Activated naive CD4-positive, alpha-beta T cell treated with anti-CD3 and anti-CD28 coated beads for 36 hours (primary cell): ENCODE measurements at regions of chr7 and their contacts with region 1.

Region 1: DNA sequence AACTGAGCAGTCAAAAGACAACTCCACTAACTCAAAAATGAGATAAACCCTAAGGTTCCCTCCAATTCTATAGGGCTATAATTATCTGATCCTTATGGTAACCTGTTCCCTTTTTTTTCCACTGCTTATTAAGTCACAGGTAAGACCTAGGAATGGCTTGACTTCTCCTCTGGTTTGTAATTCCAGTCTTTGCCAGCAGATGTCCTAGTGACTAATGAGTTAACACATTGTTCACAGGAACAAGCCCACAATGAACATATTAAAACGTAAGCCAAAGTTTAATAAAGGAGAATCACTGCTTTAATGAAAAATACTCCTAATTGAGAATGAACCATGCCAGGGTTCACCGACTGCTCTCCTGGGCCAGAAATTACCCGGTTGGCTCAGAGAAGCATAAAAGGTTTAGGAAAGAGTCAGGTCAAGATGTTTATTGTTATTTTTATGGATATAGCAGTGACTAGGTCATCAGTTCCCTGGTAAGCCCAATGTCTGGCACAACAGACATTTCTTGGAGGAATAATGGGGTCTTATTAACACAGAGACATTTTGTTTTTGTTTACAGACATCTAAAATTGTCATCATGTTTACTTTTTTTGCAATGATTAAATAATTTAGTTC is 120.1 kb downstream of the ELAPOR2 start:
- DNase-seq: peak; percentile 62
- H3K4me3 Mint-ChIP-seq: no peak overlapping the region
- H3K27ac Mint-ChIP-seq: no peak overlapping the region
- H3K4me1 Mint-ChIP-seq: no peaks in the 10 kb centered on the region
- H3K27me3 Mint-ChIP-seq: no peaks in the 10 kb centered on the region

Region 2: DNA sequence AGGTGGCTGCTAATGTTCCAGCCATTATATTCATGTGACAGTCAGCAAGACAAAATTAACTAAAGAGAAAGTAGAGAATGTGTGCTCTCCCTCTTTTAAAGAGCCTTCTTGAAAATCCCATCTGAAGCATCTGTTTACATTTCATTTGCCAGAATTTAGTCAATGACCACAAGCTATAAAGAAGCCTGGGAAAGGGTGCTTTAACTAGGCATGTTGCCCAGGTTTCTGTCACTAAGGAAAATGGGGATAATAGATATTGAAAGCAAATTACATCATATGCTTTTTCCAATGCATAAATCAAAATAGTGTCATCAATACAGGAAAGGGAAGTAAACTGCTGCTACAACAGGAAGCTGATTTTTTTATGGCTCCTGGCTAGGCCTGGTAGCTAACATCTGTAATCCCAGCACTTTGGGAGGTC is 52.5 kb after region 1 on chr7:
- CTCF ChIA-PET with region 1: interaction called, 3 read pairs
- intact Hi-C with region 1: loop called (anchors 1 kb)
- DNase-seq: no peak
- H3K4me3 Mint-ChIP-seq: no peak overlapping the region
- H3K27ac Mint-ChIP-seq: peak overlapping the region; percentile 57
- H3K4me1 Mint-ChIP-seq: peaks cover 7% of the 10 kb centered on the region
- H3K27me3 Mint-ChIP-seq: no peaks in the 10 kb centered on the region